T-cell (primary cell): ENCODE measurements at regions of chr2 and their contacts with region 1.

Region 1: DNA sequence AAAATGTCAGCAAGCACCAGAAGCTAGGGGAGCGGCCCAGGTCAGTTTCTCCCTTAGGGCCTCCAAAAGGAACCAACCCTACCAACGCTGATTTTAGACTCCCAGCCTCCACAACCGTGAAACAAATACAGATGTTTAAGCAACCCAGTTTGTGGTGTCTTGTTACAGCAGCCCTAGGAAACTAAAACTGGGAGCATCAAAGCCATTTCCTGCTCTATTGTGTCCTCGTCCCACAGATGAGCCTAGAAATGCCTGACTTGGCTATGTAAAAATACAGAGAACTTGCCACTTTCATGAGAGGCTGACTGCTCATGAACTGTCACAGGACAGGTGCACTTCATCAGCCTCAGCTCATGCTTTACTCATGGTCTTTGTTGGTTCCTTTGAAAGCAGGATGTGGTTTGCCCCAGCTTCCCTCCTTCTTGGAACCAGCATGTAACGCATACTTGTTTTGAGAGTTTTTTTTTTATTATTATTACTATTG is 97.6 kb upstream of the SLC39A10 start:
- DNase-seq: peak; percentile 41 to 91 (median 76)
- ATAC-seq: peak; percentile 90 to 96 (median 92)
- H3K4me3 ChIP-seq: no peak overlapping the region
- H3K4me3 Mint-ChIP-seq: peak overlapping the region; percentile 43 to 64 (median 61)
- H3K27ac ChIP-seq: peak overlapping the region; percentile 87
- H3K27ac Mint-ChIP-seq: peak overlapping the region; percentile 98
- H3K4me1 ChIP-seq: peaks cover 51 to 66% of the 10 kb centered on the region in 2 experiments
- H3K4me1 Mint-ChIP-seq: peaks cover 57 to 75% (median 72%) of the 10 kb centered on the region in 3 donors
- H3K27me3 ChIP-seq: no peaks in the 10 kb centered on the region
- H3K27me3 Mint-ChIP-seq: no peaks in the 10 kb centered on the region

Region 2: GRCh38 chr2:195164929-195165328 is 394.5 kb before region 1 on chr2:
- CTCF ChIA-PET with region 1: no interaction called
- POLR2A ChIA-PET with region 1: no interaction called
- DNase-seq: no peak
- ATAC-seq: no peak
- H3K4me3 ChIP-seq: no peak overlapping the region
- H3K4me3 Mint-ChIP-seq: no peak overlapping the region
- H3K27ac ChIP-seq: no peak overlapping the region
- H3K27ac Mint-ChIP-seq: no peak overlapping the region
- H3K4me1 ChIP-seq: peaks cover 0 to 2% of the 10 kb centered on the region in 2 experiments
- H3K4me1 Mint-ChIP-seq: no peaks in the 10 kb centered on the region
- H3K27me3 ChIP-seq: no peaks in the 10 kb centered on the region
- H3K27me3 Mint-ChIP-seq: no peaks in the 10 kb centered on the region

Region 3: DNA sequence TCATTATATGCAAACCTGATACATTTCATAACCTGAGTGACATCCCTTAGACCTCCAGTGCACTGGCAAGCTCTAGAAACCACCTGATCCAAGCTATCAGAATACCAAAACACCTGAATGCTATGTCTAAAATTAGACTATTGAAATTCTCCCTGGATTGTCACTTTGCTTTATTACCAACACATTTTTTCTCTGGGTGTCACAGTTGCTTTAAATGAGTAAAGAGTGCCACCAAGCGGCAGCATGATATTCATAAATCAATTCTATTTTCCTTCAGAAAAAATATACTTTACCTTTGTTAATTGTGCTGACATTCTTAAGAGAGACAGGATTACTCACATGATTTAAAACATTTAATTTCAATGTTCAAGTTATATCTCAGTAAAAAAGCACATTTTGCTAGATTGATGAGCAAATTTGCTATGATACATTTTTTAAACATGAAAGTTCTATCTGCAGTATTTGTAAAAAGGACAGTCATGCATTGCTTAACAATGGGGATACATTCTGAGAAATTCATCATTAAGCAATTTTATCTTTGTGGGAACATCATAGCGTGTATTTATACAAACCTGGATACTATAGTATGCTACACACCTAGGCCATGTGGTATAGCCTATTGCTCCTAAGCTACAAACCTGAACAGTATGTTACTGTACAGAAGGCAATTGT is 240.9 kb before region 1 on chr2:
- CTCF ChIA-PET with region 1: interaction called in 1 of 2 experiments, 11 read pairs
- POLR2A ChIA-PET with region 1: no interaction called
- DNase-seq: peak in 29 of 35 experiments; percentile 1 to 69 (median 25)
- ATAC-seq: peak in 1 of 4 experiments; percentile 36
- H3K4me3 ChIP-seq: no peak overlapping the region
- H3K4me3 Mint-ChIP-seq: no peak overlapping the region
- H3K27ac ChIP-seq: no peak overlapping the region
- H3K27ac Mint-ChIP-seq: no peak overlapping the region
- H3K4me1 ChIP-seq: peaks cover 0 to 2% of the 10 kb centered on the region in 2 experiments
- H3K4me1 Mint-ChIP-seq: peaks cover 0 to 14% (median 10%) of the 10 kb centered on the region in 3 donors
- H3K27me3 ChIP-seq: no peaks in the 10 kb centered on the region
- H3K27me3 Mint-ChIP-seq: no peaks in the 10 kb centered on the region

Region 4: DNA sequence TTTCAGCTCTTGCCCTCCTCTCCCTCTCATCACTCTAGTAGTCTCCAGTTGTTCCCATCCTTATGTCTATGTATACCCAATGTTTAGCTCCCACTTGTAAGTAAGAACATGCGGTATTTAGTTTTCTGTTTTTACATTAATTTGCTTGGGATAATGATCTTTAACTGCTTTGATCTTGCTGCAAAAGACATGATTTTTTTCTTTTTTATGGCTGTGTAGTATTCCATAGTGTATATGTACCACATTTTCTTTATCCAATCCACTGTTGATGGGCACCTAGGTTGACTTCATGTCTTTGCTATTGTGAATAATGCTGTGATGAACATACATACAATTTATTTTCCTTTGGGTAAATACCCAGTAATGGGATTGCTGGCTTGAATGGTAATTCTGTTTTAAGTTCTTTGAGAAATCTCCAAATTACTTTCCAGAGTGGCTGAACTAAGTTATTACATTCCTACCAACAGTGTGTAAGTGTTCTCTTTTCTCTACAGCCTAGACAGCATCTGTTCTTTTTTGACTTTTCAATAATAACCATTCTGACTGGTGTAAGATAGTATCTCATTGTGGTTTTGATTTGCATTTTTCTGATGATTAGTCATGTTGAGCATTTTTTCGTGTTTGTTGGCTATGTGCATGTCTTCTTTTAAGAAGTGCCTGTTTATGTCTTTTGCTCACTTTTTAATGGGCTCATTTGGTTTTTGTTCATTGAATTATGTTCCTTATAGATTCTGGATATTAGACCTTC is 82.1 kb before region 1 on chr2:
- CTCF ChIA-PET with region 1: no interaction called
- POLR2A ChIA-PET with region 1: no interaction called
- DNase-seq: no peak
- ATAC-seq: peak in 3 of 4 experiments; percentile 46 to 69 (median 52)
- H3K4me3 ChIP-seq: no peak overlapping the region
- H3K4me3 Mint-ChIP-seq: no peak overlapping the region
- H3K27ac ChIP-seq: no peak overlapping the region
- H3K27ac Mint-ChIP-seq: peak overlapping the region; percentile 9 to 17
- H3K4me1 ChIP-seq: peaks cover 2 to 3% of the 10 kb centered on the region in 2 experiments
- H3K4me1 Mint-ChIP-seq: peaks cover 15 to 23% (median 17%) of the 10 kb centered on the region in 3 donors
- H3K27me3 ChIP-seq: no peaks in the 10 kb centered on the region
- H3K27me3 Mint-ChIP-seq: no peaks in the 10 kb centered on the region

Region 5: DNA sequence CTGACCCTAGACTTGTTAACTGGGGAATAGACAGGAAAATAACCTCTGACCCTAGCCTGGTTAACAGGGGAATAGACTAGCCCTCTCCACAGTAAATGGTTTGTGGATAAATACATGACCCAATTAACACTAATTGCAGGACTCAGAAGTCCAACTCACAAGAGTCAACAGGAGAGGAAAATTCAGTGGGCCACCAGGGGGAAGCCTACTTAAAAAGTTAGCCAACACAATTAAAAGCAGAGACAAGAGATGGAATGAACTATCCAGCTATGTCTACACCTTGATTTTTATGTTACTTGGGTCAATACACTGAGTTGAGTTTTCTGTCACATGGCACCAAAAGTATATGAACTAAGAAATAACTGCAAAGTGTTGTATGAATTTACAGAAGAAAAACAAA is 61.3 kb before region 1 on chr2:
- CTCF ChIA-PET with region 1: interaction called in 1 of 2 experiments, 12 read pairs
- POLR2A ChIA-PET with region 1: no interaction called
- DNase-seq: peak; percentile 5 to 76 (median 57)
- ATAC-seq: peak; percentile 59 to 80 (median 70)
- H3K4me3 ChIP-seq: no peak overlapping the region
- H3K4me3 Mint-ChIP-seq: no peak overlapping the region
- H3K27ac ChIP-seq: no peak overlapping the region
- H3K27ac Mint-ChIP-seq: peak overlapping the region; percentile 11
- H3K4me1 ChIP-seq: no peaks in the 10 kb centered on the region
- H3K4me1 Mint-ChIP-seq: peaks cover 45 to 52% (median 45%) of the 10 kb centered on the region in 3 donors
- H3K27me3 ChIP-seq: no peaks in the 10 kb centered on the region
- H3K27me3 Mint-ChIP-seq: no peaks in the 10 kb centered on the region

Region 6: GRCh38 chr2:195533771-195534642 is 25.5 kb before region 1 on chr2:
- CTCF ChIA-PET with region 1: interaction called, 3 to 17 read pairs
- POLR2A ChIA-PET with region 1: interaction called, 3 to 4 read pairs
- DNase-seq: peak in 32 of 35 experiments; percentile 1 to 65 (median 28)
- ATAC-seq: peak; percentile 29 to 71 (median 61)
- H3K4me3 ChIP-seq: peak overlapping the region in 1 of 2 donors; percentile 49
- H3K4me3 Mint-ChIP-seq: peak overlapping the region; percentile 82 to 84 (median 84)
- H3K27ac ChIP-seq: peak overlapping the region; percentile 80
- H3K27ac Mint-ChIP-seq: peak overlapping the region; percentile 100
- H3K4me1 ChIP-seq: peaks cover 47 to 63% of the 10 kb centered on the region in 2 experiments
- H3K4me1 Mint-ChIP-seq: peaks cover 83 to 90% (median 85%) of the 10 kb centered on the region in 3 donors
- H3K27me3 ChIP-seq: no peaks in the 10 kb centered on the region
- H3K27me3 Mint-ChIP-seq: no peaks in the 10 kb centered on the region

Region 7: DNA sequence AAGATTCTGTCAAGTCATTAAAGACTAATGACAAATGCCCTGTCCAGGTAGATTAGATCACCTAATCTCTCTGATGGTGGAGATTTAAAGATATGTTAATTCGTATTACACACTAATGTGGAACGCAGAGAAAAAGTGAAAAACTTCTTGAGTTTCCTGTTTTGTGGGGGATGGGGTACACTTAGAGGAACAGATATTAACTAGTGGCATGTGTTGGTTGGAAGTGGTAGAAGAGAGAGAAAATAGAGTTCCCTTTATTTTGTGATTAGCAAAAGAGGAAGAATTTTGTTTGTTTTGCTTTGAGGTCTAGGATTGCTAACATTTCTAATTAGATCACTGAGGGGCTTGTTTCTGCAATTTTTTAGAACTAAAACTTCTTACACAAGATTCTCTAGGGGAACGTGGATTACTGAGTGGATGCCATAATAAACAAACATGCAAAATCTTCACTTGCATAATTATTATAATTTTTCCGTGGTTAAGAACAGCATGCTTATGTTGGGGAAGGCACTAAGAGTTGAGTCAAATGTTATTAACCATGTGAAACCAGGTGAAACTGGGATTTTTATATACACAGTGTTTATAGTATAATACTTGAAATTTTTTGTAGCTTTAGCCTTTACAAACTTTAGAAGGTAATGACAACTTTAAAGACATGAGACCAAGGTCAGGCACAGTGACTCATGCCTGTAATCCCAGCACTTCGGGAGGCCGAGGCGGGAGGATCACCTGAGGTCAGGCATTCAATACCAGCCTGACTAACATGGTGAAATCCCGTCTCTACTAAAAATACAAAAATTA is 709.3 kb after region 1 on chr2:
- CTCF ChIA-PET with region 1: interaction called in 1 of 2 experiments, 16 read pairs
- POLR2A ChIA-PET with region 1: no interaction called
- DNase-seq: peak in 1 of 35 experiments; percentile 38
- ATAC-seq: peak in 3 of 4 experiments; percentile 42 to 58 (median 48)
- H3K4me3 ChIP-seq: no peak overlapping the region
- H3K4me3 Mint-ChIP-seq: peak overlapping the region; percentile 70 to 75 (median 72)
- H3K27ac ChIP-seq: peak overlapping the region; percentile 50
- H3K27ac Mint-ChIP-seq: peak overlapping the region; percentile 91 to 94
- H3K4me1 ChIP-seq: peaks cover 14 to 55% of the 10 kb centered on the region in 2 experiments
- H3K4me1 Mint-ChIP-seq: peaks cover 62 to 79% (median 71%) of the 10 kb centered on the region in 3 donors
- H3K27me3 ChIP-seq: no peaks in the 10 kb centered on the region
- H3K27me3 Mint-ChIP-seq: no peaks in the 10 kb centered on the region